H1 (cell line): ENCODE measurements at regions of chr6 and their contacts with region 1.

Region 1: DNA sequence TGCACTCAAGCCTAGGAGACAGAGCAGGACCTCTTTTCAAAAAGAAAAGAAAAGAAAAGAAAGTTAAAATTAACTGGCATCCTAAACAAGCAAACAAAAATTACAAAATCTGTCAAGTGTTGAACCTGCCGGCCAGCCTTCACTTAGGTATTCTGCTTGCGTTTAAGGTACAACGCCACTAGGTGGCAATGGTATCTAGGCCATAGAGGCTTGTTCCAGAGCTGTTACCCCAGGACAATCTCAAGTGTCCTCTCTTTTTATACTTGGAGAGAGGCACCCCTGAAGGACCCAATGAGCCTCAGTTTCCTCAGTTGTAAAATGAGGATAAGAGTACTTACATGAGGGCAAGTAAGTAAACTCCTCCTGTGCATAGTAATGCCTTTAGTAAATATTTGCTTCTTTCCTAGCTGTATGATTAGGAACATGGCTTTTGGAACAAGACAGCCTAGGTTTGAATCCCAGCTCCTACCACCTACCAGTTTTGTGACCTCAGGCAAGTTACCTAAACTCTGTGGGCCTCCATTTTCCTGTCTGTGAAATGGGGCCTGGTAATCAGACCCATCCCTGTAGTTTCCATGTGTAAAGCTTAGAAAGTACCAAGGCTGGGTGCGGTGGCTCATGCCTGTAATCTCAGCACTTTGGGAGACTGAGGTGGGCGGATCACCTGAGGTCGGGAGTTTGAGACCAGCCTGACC is 5.8 kb upstream of the PACSIN1 start:
- DNase-seq: peak in 1 of 2 experiments; percentile 59
- H3K4me3 ChIP-seq: no peak overlapping the region
- H3K27ac ChIP-seq: no peak overlapping the region
- H3K4me1 ChIP-seq: peaks cover 0 to 19% (median 6%) of the 10 kb centered on the region in 4 experiments; a peak in 6 of 7 replicates
- H3K27me3 ChIP-seq: peaks cover 0 to under 1% (median under 1%) of the 10 kb centered on the region in 4 experiments; a peak in 3 of 7 replicates
- CTCF ChIP-seq: peak in 2 of 3 experiments; percentile 84 to 88; a peak in 3 of 4 replicates
- EP300 ChIP-seq: no peak
- POLR2A ChIP-seq: no peak
- RAD21 ChIP-seq: peak; percentile 97 to 98

Region 2: GRCh38 chr6:34358389-34358905 is 101.6 kb before region 1 on chr6:
- CTCF ChIA-PET with region 1: no interaction called
- POLR2A ChIA-PET with region 1: no interaction called
- DNase-seq: no peak
- H3K4me3 ChIP-seq: no peak overlapping the region
- H3K27ac ChIP-seq: no peak overlapping the region
- H3K4me1 ChIP-seq: peaks cover 0 to 9% (median 6%) of the 10 kb centered on the region in 4 experiments; a peak in 4 of 7 replicates
- H3K27me3 ChIP-seq: no peaks in the 10 kb centered on the region
- CTCF ChIP-seq: no peak
- EP300 ChIP-seq: no peak
- POLR2A ChIP-seq: no peak
- RAD21 ChIP-seq: no peak

Region 3: DNA sequence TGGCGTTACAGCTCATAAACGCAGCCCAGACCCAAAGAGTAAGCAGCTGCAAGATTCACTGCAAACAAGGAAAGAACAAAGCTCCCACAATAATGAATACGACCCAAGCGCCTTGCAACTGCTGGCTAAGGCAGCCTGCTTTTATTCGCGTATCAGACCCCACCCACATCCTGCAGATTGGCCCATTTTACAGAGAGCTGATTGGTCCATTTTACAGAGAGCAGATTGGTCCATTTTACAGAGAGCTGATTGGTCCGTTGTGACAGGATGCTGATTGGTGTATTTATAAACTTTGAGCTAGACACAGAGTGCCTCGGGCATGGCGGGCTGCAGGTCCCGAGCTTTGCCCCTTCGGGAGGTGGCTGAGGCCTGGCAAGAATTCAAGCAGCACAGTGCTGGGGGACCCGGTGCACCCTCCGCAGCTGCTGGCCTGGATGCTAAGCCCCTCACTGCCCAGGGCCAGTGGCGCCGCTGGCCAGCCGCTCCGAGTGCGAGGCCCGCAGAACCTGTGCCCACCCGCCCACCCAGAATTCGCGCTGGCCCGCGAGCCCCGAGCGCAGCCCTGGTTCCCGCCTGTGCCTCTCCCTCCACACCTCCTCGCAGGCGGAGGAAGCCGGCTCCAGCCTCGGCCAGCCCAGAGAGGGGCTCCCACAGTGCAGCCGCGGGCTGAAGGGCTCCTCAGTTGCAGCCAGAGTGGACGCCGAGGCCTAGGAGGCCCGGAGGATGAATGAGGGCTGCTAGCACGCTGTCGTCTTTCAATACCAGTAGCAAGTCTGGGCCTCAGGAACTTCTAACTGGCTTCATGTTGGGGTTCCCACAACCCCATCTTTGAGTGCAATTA is 23.0 kb before region 1 on chr6:
- CTCF ChIA-PET with region 1: interaction called, 15 read pairs
- POLR2A ChIA-PET with region 1: interaction called, 3 read pairs
- DNase-seq: no peak
- H3K4me3 ChIP-seq: no peak overlapping the region
- H3K27ac ChIP-seq: no peak overlapping the region
- H3K4me1 ChIP-seq: no peaks in the 10 kb centered on the region
- H3K27me3 ChIP-seq: no peaks in the 10 kb centered on the region
- CTCF ChIP-seq: no peak
- EP300 ChIP-seq: no peak
- POLR2A ChIP-seq: no peak
- RAD21 ChIP-seq: no peak

Region 4: DNA sequence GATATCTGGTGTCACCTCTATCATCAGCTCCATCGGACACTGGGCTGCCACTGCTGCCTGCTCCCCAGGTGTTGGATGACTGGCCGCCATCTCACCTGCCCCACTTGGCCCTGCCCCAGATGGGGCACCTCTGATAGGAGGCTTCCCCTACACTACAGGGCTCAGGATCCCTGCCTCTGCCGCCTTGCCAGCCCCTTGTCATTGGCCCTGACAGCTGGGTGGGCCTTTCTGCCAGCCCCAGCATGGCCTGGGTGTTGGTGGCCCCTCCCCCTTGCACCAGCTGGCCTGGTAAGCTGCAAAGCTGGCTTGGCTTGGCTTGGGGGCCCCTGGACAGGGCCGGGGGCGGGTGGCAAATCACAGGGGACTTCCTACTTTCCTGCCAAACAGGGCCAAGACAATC is 16.4 kb after region 1 on chr6:
- CTCF ChIA-PET with region 1: interaction called, 13 read pairs
- POLR2A ChIA-PET with region 1: interaction called, 6 read pairs
- DNase-seq: no peak
- H3K4me3 ChIP-seq: no peak overlapping the region
- H3K27ac ChIP-seq: no peak overlapping the region
- H3K4me1 ChIP-seq: peaks cover 0 to 17% (median 5%) of the 10 kb centered on the region in 4 experiments; a peak in 4 of 7 replicates
- H3K27me3 ChIP-seq: no peaks in the 10 kb centered on the region
- CTCF ChIP-seq: no peak
- EP300 ChIP-seq: no peak
- POLR2A ChIP-seq: no peak
- RAD21 ChIP-seq: no peak

Region 5: GRCh38 chr6:34526992-34527728 is 67.1 kb after region 1 on chr6:
- CTCF ChIA-PET with region 1: interaction called, 18 read pairs
- POLR2A ChIA-PET with region 1: interaction called, 11 read pairs
- DNase-seq: peak; percentile 80 to 96
- H3K4me3 ChIP-seq: peak overlapping the region in 3 of 4 experiments; percentile 12 to 54 (median 18); a peak in 3 of 8 replicates
- H3K27ac ChIP-seq: no peak overlapping the region
- H3K4me1 ChIP-seq: peaks cover 3 to 20% (median 9%) of the 10 kb centered on the region in 4 experiments
- H3K27me3 ChIP-seq: no peaks in the 10 kb centered on the region
- CTCF ChIP-seq: peak in 2 of 3 experiments; percentile 64 to 74; a peak in 3 of 4 replicates
- EP300 ChIP-seq: no peak
- POLR2A ChIP-seq: peak in 1 of 2 experiments; percentile 54; a peak in 1 of 3 replicates
- RAD21 ChIP-seq: peak; percentile 60 to 62

Region 6: GRCh38 chr6:34560366-34561226 is 100.5 kb after region 1 on chr6:
- CTCF ChIA-PET with region 1: interaction called, 20 read pairs
- POLR2A ChIA-PET with region 1: interaction called, 3 read pairs
- DNase-seq: no peak
- H3K4me3 ChIP-seq: no peak overlapping the region
- H3K27ac ChIP-seq: no peak overlapping the region
- H3K4me1 ChIP-seq: peaks cover 0 to 6% (median 4%) of the 10 kb centered on the region in 4 experiments; a peak in 4 of 7 replicates
- H3K27me3 ChIP-seq: no peaks in the 10 kb centered on the region
- CTCF ChIP-seq: no peak
- EP300 ChIP-seq: no peak
- POLR2A ChIP-seq: no peak
- RAD21 ChIP-seq: peak in 1 of 2 experiments; percentile 21; a peak in 2 of 4 replicates

Region 7: GRCh38 chr6:34610819-34611477 is 150.9 kb after region 1 on chr6:
- CTCF ChIA-PET with region 1: interaction called, 213 read pairs
- POLR2A ChIA-PET with region 1: interaction called, 3 read pairs
- DNase-seq: no peak
- H3K4me3 ChIP-seq: no peak overlapping the region
- H3K27ac ChIP-seq: no peak overlapping the region
- H3K4me1 ChIP-seq: no peaks in the 10 kb centered on the region
- H3K27me3 ChIP-seq: no peaks in the 10 kb centered on the region
- CTCF ChIP-seq: no peak
- EP300 ChIP-seq: no peak
- POLR2A ChIP-seq: no peak
- RAD21 ChIP-seq: no peak